WTC11 (cell line): ENCODE measurements at regions of chr16 and their contacts with region 1.

Region 1: DNA sequence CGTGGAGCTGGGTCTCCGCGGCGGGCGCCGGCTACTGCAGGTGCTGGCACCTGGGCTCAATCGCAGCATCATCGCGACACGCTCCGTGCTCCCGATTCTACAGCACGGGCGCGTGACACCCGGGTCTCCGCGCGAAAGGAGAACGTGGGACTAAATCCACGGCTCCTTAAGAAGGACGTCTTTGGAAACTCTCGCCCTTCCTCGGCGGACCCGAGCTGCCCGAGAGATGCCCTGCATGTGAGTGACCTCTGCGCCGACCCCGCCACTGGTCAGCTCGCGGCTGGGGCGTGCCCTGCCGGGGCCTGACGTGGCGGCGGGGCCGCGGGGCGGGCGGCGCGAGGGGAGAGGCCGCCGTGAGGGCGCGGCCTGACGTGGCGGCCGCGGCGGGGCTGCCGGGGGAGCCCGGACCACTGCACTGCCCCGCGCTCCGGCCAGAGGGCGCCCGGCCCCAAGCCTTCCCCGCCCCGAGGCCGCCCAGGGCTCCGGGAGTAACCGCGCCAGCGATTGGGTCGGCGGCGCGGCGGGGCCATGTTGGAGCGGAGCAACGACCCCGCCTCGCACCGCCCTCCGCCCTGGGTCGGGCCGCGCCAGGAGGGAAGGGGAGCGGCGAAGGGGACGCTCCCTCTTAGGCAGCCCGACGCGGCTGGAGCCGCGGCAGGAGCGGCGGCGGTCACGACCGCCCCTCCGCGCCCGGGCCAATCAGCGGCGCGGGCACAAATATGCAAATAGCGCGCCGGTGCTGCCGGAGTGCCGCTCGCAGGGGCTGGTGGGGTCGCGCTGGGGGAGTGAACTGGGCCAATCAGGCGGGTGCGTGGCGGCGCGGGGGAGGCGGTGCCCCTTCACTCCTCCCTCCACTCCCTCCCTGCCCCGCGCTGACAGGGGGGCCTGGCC is 75.6 kb downstream of the CHD9 start:
- DNase-seq: peak; percentile 95
- ATAC-seq: peak; percentile 89
- H3K4me3 Mint-ChIP-seq: peak overlapping the region; percentile 90
- H3K27ac Mint-ChIP-seq: peak overlapping the region; percentile 97
- H3K4me1 Mint-ChIP-seq: peaks cover 25% of the 10 kb centered on the region
- H3K27me3 Mint-ChIP-seq: peaks cover 2% of the 10 kb centered on the region; the same call in 1 of the 2 replicates
- CTCF ChIP-seq: peak; percentile 40; the same call in 1 of the 2 replicates

Region 2: GRCh38 chr16:53099318-53100130 is 30.9 kb before region 1 on chr16:
- CTCF ChIA-PET with region 1: interaction called, 7 read pairs
- POLR2A ChIA-PET with region 1: interaction called, 10 read pairs
- DNase-seq: peak; percentile 92
- ATAC-seq: peak; percentile 86
- H3K4me3 Mint-ChIP-seq: peak overlapping the region; percentile 61
- H3K27ac Mint-ChIP-seq: peak overlapping the region; percentile 98
- H3K4me1 Mint-ChIP-seq: peaks cover 41% of the 10 kb centered on the region
- H3K27me3 Mint-ChIP-seq: no peaks in the 10 kb centered on the region
- CTCF ChIP-seq: no peak

Region 3: GRCh38 chr16:53207810-53208752 is 77.7 kb after region 1 on chr16:
- CTCF ChIA-PET with region 1: interaction called, 10 read pairs
- POLR2A ChIA-PET with region 1: no interaction called
- DNase-seq: peak; percentile 29
- ATAC-seq: peak; percentile 98
- H3K4me3 Mint-ChIP-seq: peak overlapping the region; percentile 80
- H3K27ac Mint-ChIP-seq: peak overlapping the region; percentile 99
- H3K4me1 Mint-ChIP-seq: peaks cover 39% of the 10 kb centered on the region
- H3K27me3 Mint-ChIP-seq: no peaks in the 10 kb centered on the region
- CTCF ChIP-seq: no peak

Region 4: GRCh38 chr16:53291757-53292392 is 161.5 kb after region 1 on chr16:
- CTCF ChIA-PET with region 1: no interaction called
- POLR2A ChIA-PET with region 1: no interaction called
- DNase-seq: no peak
- ATAC-seq: no peak
- H3K4me3 Mint-ChIP-seq: no peak overlapping the region
- H3K27ac Mint-ChIP-seq: no peak overlapping the region
- H3K4me1 Mint-ChIP-seq: no peaks in the 10 kb centered on the region
- H3K27me3 Mint-ChIP-seq: no peaks in the 10 kb centered on the region
- CTCF ChIP-seq: no peak